ENCODE measurements at regions of chr12 and their contacts with region 1.

Region 1: DNA sequence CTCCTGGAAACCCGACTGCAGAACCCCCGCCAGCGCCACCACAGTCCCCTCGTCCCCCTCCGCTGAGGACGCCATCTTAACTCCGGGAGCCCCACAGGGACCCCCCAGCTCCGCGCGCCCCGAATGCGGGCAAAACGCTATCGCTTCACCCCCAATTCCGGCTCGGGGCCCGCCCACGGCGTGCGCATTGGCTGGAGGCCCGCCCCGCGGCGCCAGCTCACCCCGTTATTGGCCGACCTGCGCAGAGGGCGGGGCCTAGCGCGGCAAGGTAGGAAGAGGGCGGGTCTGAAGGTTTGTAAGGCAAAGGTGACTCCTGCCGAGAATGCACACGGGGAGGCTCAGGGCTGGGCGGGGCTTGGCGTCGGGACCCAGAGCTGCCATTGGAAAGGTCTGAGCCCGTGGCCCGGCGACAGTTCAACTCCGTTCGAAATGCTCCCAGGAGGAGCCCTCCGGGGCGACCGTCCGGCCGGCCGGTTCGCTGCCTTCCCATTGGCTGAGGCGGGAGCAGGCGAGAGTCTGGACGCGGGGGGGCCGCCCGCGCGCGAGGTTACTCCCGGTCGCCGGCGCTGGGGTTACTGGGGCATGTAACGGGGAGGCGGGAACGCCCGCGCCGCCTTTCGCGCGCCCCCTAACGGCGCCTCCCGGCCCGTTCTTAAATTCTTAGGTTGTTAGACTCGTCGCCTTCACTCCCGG is at the start of gene LPCAT3:
- DNase-seq: peak; percentile 98
- H3K4me3 Mint-ChIP-seq: peak within 1 kb of the TSS; percentile 94
- H3K27ac Mint-ChIP-seq: peak within 1 kb of the TSS; percentile 92
- H3K4me1 Mint-ChIP-seq: peaks cover 35% of the 10 kb centered on the region
- H3K27me3 Mint-ChIP-seq: no peaks in the 10 kb centered on the region
- total RNA-seq, gene LPCAT3: 22.7 to 27.2 TPM

Region 2: GRCh38 chr12:6904280-6905278 is 113.9 kb before region 1 on chr12 and contains the start of gene LRRC23:
- CTCF ChIA-PET with region 1: no interaction called
- intact Hi-C with region 1: loop called (anchors 1 kb)
- DNase-seq: peak; percentile 99
- H3K4me3 Mint-ChIP-seq: no peak within 1 kb of the TSS
- H3K27ac Mint-ChIP-seq: no peak within 1 kb of the TSS
- H3K4me1 Mint-ChIP-seq: peaks cover 3% of the 10 kb centered on the region
- H3K27me3 Mint-ChIP-seq: no peaks in the 10 kb centered on the region
- total RNA-seq, gene LRRC23: 6.3 to 6.4 TPM

Region 3: GRCh38 chr12:6944381-6945186 is 73.9 kb before region 1 on chr12:
- CTCF ChIA-PET with region 1: interaction called, 4 read pairs
- intact Hi-C with region 1: loop called (anchors 1 kb)
- DNase-seq: peak; percentile 96
- H3K4me3 Mint-ChIP-seq: peak overlapping the region; percentile 94
- H3K27ac Mint-ChIP-seq: peak overlapping the region; percentile 93
- H3K4me1 Mint-ChIP-seq: peaks cover 49% of the 10 kb centered on the region
- H3K27me3 Mint-ChIP-seq: no peaks in the 10 kb centered on the region

Region 4: GRCh38 chr12:6998708-6999451 is 19.6 kb before region 1 on chr12:
- CTCF ChIA-PET with region 1: interaction called, 10 read pairs
- intact Hi-C with region 1: no loop called
- DNase-seq: no peak
- H3K4me3 Mint-ChIP-seq: no peak overlapping the region
- H3K27ac Mint-ChIP-seq: no peak overlapping the region
- H3K4me1 Mint-ChIP-seq: peaks cover 5% of the 10 kb centered on the region
- H3K27me3 Mint-ChIP-seq: no peaks in the 10 kb centered on the region

Region 5: DNA sequence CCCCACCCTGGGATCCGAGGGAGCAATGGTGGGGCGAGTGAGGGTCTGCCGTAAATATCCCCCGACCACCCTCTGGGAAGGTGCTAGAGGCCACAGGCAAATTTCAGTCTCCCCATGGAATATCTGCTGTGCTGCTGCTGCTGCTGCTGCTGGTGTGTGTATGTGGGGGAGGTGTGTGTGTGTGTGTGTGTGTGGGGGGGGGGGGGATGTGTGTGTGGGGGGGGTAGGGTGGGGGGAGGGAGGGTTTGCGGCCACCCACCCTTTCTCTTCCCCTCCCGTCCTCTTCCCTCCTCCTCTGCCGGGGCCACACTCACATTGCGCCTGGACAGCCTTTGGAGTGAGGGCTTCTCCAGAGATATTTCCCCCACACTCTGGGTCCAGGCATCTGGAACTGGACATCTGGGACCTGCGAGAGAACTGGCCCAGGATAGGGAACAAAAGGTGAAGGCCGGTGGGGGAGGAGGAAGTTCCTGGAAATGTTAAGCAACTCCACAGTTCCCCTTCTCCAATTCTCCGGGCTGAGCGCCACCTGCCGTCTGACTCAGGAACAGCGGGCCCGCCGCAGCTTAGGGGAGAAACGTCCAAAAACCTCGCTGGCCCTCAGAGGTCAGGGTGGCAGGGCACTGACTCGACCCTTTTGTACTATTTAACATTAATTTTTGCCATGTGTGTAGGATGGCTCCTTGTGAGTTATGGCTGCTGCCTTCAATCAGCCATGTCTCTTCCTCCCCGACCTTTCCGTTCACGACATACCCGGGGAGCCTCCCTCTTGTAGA is 90.5 kb after region 1 on chr12 and contains the start of gene C1RL:
- CTCF ChIA-PET with region 1: interaction called, 8 read pairs
- intact Hi-C with region 1: loop called (anchors 1 kb)
- DNase-seq: peak; percentile 91
- H3K4me3 Mint-ChIP-seq: peak within 1 kb of the TSS; percentile 95
- H3K27ac Mint-ChIP-seq: peak within 1 kb of the TSS; percentile 97
- H3K4me1 Mint-ChIP-seq: peaks cover 29% of the 10 kb centered on the region
- H3K27me3 Mint-ChIP-seq: no peaks in the 10 kb centered on the region
- total RNA-seq, gene C1RL: 10.3 to 11.5 TPM

Region 6: DNA sequence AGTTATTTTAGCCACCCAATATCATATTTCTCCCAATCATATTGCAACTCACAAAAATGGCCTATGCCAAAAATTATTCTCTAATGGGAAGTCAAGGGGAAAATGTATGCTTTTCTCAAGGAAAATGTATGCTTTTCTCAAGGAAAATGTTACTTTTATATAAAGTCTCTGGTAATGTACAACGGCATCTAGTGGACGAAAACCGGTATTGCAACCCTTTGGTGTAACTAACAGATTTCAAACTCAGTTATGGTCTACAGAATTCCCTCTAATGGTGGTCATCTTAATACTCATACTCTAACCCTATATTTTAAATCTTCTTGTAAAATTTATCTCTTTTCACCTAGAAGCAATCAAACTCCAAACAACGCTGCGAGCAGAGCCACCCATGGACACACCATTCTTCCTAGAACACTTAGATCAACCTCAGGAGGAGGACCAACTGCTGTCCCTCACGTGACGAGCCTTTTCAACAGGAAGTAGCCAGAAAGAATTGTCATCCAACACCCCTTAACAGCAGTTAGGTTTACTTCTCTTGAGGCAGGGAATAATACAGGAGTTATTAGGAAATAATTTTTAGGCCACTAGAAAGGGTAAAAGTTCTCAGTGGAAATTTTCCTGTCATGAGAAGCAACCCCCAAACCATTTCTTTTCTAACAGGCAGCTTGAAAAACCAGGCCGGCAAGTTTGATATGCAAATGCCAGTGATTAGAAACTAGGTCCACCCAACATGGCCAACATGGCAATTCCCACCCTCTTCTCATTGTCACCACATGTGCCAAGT is 627.1 kb after region 1 on chr12:
- CTCF ChIA-PET with region 1: no interaction called
- intact Hi-C with region 1: loop called (anchors 10 kb)
- DNase-seq: peak; percentile 55
- H3K4me3 Mint-ChIP-seq: no peak overlapping the region
- H3K27ac Mint-ChIP-seq: no peak overlapping the region
- H3K4me1 Mint-ChIP-seq: peaks cover 6% of the 10 kb centered on the region
- H3K27me3 Mint-ChIP-seq: no peaks in the 10 kb centered on the region